PC-9 (cell line): ENCODE measurements at regions of chrX and their contacts with region 1.

Region 1: GRCh38 chrX:30615229-30615628 is 37.7 kb upstream of the TASL start:
- DNase-seq: no peak
- H3K4me3 ChIP-seq: no peak overlapping the region
- H3K27ac ChIP-seq: no peak overlapping the region
- H3K4me1 ChIP-seq: no peaks in the 10 kb centered on the region
- H3K27me3 ChIP-seq: no peaks in the 10 kb centered on the region
- CTCF ChIP-seq: no peak

Region 2: GRCh38 chrX:30593435-30594200 is 21.6 kb before region 1 on chrX:
- CTCF ChIA-PET with region 1: no interaction called
- POLR2A ChIA-PET with region 1: interaction called, 16 read pairs
- intact Hi-C with region 1: no loop called
- DNase-seq: peak; percentile 41 to 42
- H3K4me3 ChIP-seq: no peak overlapping the region
- H3K27ac ChIP-seq: peak overlapping the region; percentile 43
- H3K4me1 ChIP-seq: peaks cover 22% of the 10 kb centered on the region; the same call in 1 of the 2 replicates
- H3K27me3 ChIP-seq: no peaks in the 10 kb centered on the region
- CTCF ChIP-seq: peak; percentile 30; the same call in 1 of the 2 replicates